Endothelial cell of umbilical vein (primary cell): ENCODE measurements at regions of chr3 and their contacts with region 1.

Region 1: GRCh38 chr3:136919799-136920580 is 37.8 kb upstream of the IL20RB start:
- DNase-seq: peak; percentile 92
- H3K4me3 ChIP-seq: peak overlapping the region in 1 of 3 experiments; percentile 9
- H3K27ac ChIP-seq: peak overlapping the region; percentile 74
- H3K4me1 ChIP-seq: peaks cover 32% of the 10 kb centered on the region
- H3K27me3 ChIP-seq: no peaks in the 10 kb centered on the region
- CTCF ChIP-seq: no peak
- POLR2A ChIP-seq: peak; percentile 64

Region 2: GRCh38 chr3:136838641-136839555 is 81.1 kb before region 1 on chr3:
- CTCF ChIA-PET with region 1: interaction called, 3 read pairs
- POLR2A ChIA-PET with region 1: no interaction called
- dilution Hi-C with region 1: no loop called
- intact Hi-C with region 1: loop called (anchors 1 kb)
- DNase-seq: peak; percentile 88
- H3K4me3 ChIP-seq: peak overlapping the region in 1 of 3 experiments; percentile 33
- H3K27ac ChIP-seq: peak overlapping the region; percentile 86
- H3K4me1 ChIP-seq: peaks cover 54% of the 10 kb centered on the region
- H3K27me3 ChIP-seq: no peaks in the 10 kb centered on the region
- CTCF ChIP-seq: no peak
- POLR2A ChIP-seq: peak; percentile 25

Region 3: DNA sequence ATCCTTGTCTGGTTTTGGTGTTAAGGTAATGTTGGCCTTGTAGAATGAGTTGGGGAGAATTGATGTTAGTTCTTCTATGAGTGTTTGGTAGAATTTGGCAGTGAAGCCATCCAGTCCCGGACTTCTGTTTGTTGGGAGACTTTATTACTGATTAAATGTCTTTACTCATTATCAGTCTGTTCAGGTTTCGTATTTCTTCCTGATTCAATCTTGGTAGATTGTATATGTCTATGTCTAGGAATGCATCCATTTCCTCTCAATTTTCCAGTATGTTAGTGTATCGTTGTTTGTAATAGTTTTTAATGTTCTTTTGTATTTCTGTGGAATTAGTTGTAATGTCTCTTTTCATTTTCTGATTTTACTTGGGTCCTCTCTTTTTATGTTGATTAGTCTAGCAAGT is 18.6 kb before region 1 on chr3:
- CTCF ChIA-PET with region 1: no interaction called
- POLR2A ChIA-PET with region 1: no interaction called
- dilution Hi-C with region 1: no loop called
- intact Hi-C with region 1: no loop called
- DNase-seq: peak; percentile 76
- H3K4me3 ChIP-seq: peak overlapping the region in 1 of 3 experiments; percentile 37
- H3K27ac ChIP-seq: peak overlapping the region; percentile 79
- H3K4me1 ChIP-seq: peaks cover 38% of the 10 kb centered on the region
- H3K27me3 ChIP-seq: no peaks in the 10 kb centered on the region
- CTCF ChIP-seq: no peak
- POLR2A ChIP-seq: no peak

Region 4: DNA sequence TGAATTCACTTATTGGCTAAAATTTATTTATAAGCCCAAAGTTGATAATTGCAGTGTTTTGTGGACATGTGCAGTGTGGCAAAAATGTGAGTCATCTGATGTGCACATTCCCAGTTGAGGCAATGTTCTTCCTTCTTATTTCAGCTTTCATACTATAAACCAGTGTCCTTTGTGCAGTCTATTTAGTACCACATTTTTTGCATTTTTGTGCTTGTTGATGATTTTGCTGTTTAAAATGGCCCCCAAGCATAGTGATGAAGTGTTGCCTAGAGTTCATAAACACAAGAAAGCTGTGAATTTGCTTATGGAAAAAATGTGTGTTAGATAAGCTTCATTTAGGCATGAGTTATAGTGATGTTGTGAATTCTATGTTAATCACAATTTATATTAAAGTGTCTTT is 18.3 kb after region 1 on chr3:
- CTCF ChIA-PET with region 1: interaction called, 3 read pairs
- POLR2A ChIA-PET with region 1: interaction called, 4 read pairs
- dilution Hi-C with region 1: no loop called
- intact Hi-C with region 1: loop called (anchors 1 kb)
- DNase-seq: no peak
- H3K4me3 ChIP-seq: no peak overlapping the region
- H3K27ac ChIP-seq: peak overlapping the region; percentile 62
- H3K4me1 ChIP-seq: peaks cover 27% of the 10 kb centered on the region
- H3K27me3 ChIP-seq: no peaks in the 10 kb centered on the region
- CTCF ChIP-seq: no peak
- POLR2A ChIP-seq: no peak